PC-3 (cell line): ENCODE measurements at regions of chr7 and their contacts with region 1.

Region 1: DNA sequence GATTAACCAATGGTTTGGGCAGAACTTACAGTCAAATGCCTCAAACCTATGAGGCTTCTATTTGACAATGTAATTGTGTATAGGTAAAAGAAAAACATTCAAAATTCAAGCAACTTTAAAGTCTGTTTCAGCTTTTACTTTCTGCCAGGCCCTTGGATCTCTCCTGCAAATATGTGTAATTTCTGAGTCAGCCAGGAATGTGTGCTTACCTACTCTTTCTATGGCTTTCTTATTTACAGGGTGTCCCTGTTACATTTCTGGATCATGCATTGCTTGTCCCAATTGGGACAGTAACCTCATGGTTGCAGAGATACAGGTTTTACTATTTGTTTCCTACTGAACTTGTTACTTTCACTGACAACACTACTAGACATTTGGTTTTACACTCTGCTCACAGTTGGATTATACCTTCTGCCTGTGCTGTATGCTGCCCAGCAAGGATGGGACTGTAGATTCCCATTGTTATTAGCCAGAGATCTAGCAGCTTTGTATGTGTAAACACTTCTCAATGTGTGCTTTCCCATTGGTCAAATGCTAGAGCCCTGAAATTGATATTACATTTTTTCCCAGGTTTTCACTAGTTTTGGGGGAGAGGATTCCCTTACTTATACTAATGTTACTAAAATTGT is 355.3 kb downstream of the ARL4A start:
- DNase-seq: peak; percentile 87
- ATAC-seq: peak; percentile 99
- H3K4me3 ChIP-seq: no peak overlapping the region
- H3K27ac ChIP-seq: peak overlapping the region; percentile 68
- H3K4me1 ChIP-seq: peaks cover 26% of the 10 kb centered on the region
- H3K27me3 ChIP-seq: no peaks in the 10 kb centered on the region
- CTCF ChIP-seq: no peak

Region 2: GRCh38 chr7:12942609-12943008 is 100.1 kb before region 1 on chr7:
- CTCF ChIA-PET with region 1: no interaction called
- POLR2A ChIA-PET with region 1: no interaction called
- intact Hi-C with region 1: loop called (anchors 5 kb)
- DNase-seq: peak; percentile 62
- ATAC-seq: peak; percentile 82
- H3K4me3 ChIP-seq: no peak overlapping the region
- H3K27ac ChIP-seq: no peak overlapping the region
- H3K4me1 ChIP-seq: peaks cover 33% of the 10 kb centered on the region
- H3K27me3 ChIP-seq: no peaks in the 10 kb centered on the region
- CTCF ChIP-seq: no peak

Region 3: GRCh38 chr7:12979181-12979580 is 63.5 kb before region 1 on chr7:
- CTCF ChIA-PET with region 1: no interaction called
- POLR2A ChIA-PET with region 1: no interaction called
- intact Hi-C with region 1: no loop called
- DNase-seq: no peak
- ATAC-seq: no peak
- H3K4me3 ChIP-seq: no peak overlapping the region
- H3K27ac ChIP-seq: no peak overlapping the region
- H3K4me1 ChIP-seq: no peaks in the 10 kb centered on the region
- H3K27me3 ChIP-seq: no peaks in the 10 kb centered on the region
- CTCF ChIP-seq: no peak

Region 4: DNA sequence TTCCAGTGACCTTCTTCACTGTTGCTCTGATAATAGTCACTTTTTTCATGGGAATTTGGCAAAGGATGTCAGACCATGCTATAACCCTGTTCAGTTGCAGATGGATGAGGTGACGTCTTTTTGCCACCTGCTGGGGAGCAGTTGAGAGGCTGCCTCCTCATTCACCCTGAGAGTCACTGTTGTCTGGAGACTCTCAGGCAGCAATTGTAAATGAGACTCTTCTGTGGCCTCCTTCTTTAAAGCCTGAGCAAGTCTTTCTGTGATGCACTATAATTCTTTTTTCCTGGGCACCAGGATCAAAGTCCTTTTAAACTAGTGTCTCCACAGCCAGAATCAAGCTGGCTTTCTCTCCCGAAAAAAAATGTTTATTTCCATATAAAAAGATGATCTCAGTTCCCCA is 10.2 kb before region 1 on chr7:
- CTCF ChIA-PET with region 1: no interaction called
- POLR2A ChIA-PET with region 1: no interaction called
- intact Hi-C with region 1: loop called (anchors 1 kb)
- DNase-seq: no peak
- ATAC-seq: no peak
- H3K4me3 ChIP-seq: no peak overlapping the region
- H3K27ac ChIP-seq: no peak overlapping the region
- H3K4me1 ChIP-seq: peaks cover 17% of the 10 kb centered on the region
- H3K27me3 ChIP-seq: no peaks in the 10 kb centered on the region
- CTCF ChIP-seq: no peak